Caco-2 (cell line): ENCODE measurements at regions of chr7 and their contacts with region 1.

Region 1: GRCh38 chr7:25996006-25996408 is 156.0 kb upstream of the NFE2L3 start:
- DNase-seq: peak; percentile 71 to 72
- H3K4me3 ChIP-seq: no peak overlapping the region
- H3K4me3 Mint-ChIP-seq: peak overlapping the region; percentile 17
- H3K27ac Mint-ChIP-seq: peak overlapping the region; percentile 65
- H3K4me1 ChIP-seq: peaks cover 33% of the 10 kb centered on the region
- H3K4me1 Mint-ChIP-seq: peaks cover 24% of the 10 kb centered on the region
- H3K27me3 ChIP-seq: no peaks in the 10 kb centered on the region
- H3K27me3 Mint-ChIP-seq: no peaks in the 10 kb centered on the region
- CTCF ChIP-seq: peak; percentile 47 to 68

Region 2: GRCh38 chr7:26061688-26062150 is 65.7 kb after region 1 on chr7:
- CTCF ChIA-PET with region 1: interaction called, 3 read pairs
- POLR2A ChIA-PET with region 1: no interaction called
- intact Hi-C with region 1: loop called (anchors 1 kb)
- DNase-seq: peak; percentile 82 to 87
- H3K4me3 ChIP-seq: no peak overlapping the region
- H3K4me3 Mint-ChIP-seq: no peak overlapping the region
- H3K27ac Mint-ChIP-seq: no peak overlapping the region
- H3K4me1 ChIP-seq: 0 out of 2 replicates have a peak, but pooled peaks cover 7% of the 10 kb centered on the region
- H3K4me1 Mint-ChIP-seq: peaks cover 7% of the 10 kb centered on the region
- H3K27me3 ChIP-seq: no peaks in the 10 kb centered on the region
- H3K27me3 Mint-ChIP-seq: no peaks in the 10 kb centered on the region
- CTCF ChIP-seq: peak; percentile 88 to 91